ENCODE measurements at regions of chr12 and their contacts with region 1.

Region 1: DNA sequence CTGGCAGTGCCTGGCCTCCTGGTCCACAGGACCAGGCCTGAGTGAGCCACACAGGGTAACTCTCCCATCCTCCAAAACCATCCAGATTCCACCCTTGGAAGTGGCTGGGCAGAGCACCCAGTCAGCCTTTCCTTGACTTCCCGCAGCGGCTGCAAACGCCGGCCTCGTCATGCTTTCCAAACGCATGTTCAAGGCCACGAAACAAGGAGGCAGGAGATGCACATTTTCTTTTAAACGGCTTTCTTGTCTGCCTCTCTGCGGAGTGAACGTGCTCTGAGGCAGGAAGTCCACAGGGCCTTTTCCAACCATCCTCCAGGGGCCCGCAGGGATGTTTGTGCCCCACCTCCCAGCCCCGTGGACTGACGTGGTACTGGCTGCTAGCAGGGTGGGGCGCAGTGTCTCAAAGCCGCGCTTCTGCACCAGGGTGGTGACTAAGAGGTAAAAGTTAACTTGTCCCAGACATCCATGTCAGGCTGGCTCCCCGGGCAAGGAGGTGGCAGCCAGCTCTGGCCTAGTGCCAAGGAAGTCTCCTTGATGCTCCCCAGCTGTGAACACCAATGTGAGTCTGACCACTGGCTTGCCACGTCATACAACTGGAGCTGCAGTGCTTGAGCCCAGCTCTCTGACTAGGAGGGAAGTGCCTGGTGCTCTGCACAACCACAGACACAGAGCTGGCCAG is 45.0 kb downstream of the KCNA5 start:
- DNase-seq: no peak
- H3K4me3 ChIP-seq: no peak overlapping the region
- H3K27ac ChIP-seq: no peak overlapping the region
- H3K4me1 ChIP-seq: no peaks in the 10 kb centered on the region
- H3K27me3 ChIP-seq: no peaks in the 10 kb centered on the region
- CTCF ChIP-seq: no peak
- POLR2A ChIP-seq: no peak

Region 2: GRCh38 chr12:4918950-4919660 is 169.6 kb before region 1 on chr12:
- intact Hi-C with region 1: no loop called
- DNase-seq: no peak
- H3K4me3 ChIP-seq: no peak overlapping the region
- H3K27ac ChIP-seq: no peak overlapping the region
- H3K4me1 ChIP-seq: no peaks in the 10 kb centered on the region
- H3K27me3 ChIP-seq: no peaks in the 10 kb centered on the region
- CTCF ChIP-seq: no peak
- POLR2A ChIP-seq: no peak

Region 3: DNA sequence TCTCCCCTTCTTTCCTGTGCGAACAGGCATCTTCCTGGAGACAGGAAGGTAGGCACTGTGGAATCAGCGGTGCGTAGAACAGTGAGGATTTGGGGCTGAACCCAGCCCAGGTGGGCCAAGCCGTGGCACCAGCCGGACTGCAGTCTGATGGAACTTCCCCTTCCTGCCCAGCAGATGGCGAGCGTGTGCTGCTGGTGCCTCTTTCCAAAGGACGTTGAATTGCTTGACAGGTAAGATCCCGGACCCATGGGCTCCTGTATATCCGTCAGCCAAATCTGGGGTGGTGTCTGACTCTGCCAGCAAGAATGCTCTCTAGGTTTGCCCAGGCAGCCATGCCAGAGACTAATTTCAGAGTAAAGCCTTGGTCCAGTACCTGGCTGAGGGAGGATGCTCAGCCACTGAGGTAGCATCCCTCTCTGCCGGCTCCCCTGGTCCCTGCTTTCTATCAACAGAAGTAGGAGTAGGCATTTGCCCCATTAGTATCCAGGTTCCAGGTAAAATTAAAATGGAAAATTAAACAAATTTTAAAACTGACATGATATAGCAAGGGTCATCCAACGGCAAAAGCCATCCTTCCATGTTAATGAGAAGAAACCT is 66.2 kb before region 1 on chr12:
- intact Hi-C with region 1: loop called (anchors 5 kb)
- DNase-seq: peak; percentile 30
- H3K4me3 ChIP-seq: no peak overlapping the region
- H3K27ac ChIP-seq: no peak overlapping the region
- H3K4me1 ChIP-seq: no peaks in the 10 kb centered on the region
- H3K27me3 ChIP-seq: no peaks in the 10 kb centered on the region
- CTCF ChIP-seq: peak; percentile 47 to 77 (median 59)
- POLR2A ChIP-seq: no peak